ENCODE measurements at regions of chr2 and their contacts with region 1.

Region 1: GRCh38 chr2:101597351-101597944 is 100.1 kb upstream of the MAP4K4 start:
- DNase-seq: peak; percentile 78

Region 2: DNA sequence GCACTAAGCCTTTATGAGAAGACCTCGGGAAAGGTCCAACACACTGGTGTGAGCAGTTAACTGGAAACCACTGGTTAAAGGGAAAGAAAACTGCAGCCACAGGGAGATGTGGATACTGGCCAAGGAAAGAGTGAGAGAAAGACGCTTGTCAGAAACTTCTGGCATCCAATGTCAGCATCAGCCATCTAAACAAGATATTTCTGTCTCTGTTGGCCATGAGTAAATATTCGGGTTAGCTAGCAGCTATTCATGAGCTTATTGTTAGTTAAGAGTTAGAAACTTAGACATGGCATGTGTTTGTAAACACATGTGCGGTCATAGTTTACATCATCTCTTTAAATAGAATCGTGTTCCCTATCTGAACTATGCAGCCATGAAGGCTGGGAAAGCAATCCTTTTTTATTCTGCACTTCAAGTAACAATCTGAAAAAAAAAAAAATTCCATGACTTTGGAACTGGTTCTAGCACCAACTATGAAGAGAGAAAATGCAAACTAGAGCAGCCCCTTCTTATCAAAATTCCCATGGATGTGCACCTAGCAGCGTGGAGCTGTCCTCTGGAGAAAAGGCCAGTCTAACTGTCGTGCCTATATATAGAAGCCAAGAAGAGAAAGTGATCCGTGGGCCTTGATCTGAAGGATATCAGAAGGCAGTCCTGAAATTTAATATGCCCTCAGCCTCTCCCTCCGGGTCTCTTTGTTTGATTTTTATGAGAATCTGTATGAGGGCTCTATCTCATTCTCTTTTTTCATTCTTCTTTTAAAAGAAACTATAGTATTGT is 38.5 kb before region 1 on chr2:
- intact Hi-C with region 1: loop called (anchors 5 kb)
- DNase-seq: no peak

Region 3: GRCh38 chr2:101569886-101570520 is 27.4 kb before region 1 on chr2:
- intact Hi-C with region 1: no loop called
- DNase-seq: no peak